ENCODE measurements at regions of chr11 and their contacts with region 1.

Region 1: DNA sequence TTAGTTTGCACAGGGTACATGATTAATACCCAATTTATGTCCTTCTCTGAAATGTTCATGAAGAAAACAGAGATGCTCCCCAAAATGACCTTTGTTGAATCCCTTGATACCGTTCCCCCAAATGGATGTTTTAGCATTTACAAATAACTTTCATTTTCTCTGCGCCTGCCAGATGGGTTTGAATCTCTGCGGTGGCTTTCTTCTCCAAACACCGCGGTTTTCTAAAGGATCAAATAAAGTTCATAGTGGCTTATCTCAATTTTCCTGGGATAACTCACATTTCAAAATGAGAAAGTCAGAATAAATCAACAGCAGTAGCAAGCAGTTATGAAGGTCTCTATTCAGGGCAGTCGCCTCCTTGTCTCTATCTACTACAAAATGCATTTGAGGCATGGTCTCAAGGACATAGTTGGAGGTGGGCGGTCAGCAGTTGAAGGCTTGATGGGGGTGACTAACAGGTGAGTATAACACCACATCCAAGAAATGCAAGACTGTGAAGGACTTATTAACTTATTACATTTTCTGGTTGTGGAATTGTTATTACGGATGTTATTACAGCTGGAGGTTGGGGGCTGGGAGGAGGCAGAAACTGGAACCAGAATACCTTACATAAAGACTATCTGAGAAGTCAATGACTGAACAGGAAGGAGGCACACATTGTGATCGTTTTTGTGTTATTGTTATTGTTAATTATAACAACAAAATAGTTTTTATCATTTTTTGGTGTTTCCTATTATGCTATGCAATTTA is 1513.3 kb downstream of the FAM181B start:
- DNase-seq: no peak
- H3K4me3 Mint-ChIP-seq: no peak overlapping the region
- H3K27ac Mint-ChIP-seq: no peak overlapping the region
- H3K4me1 Mint-ChIP-seq: no peaks in the 10 kb centered on the region
- H3K27me3 Mint-ChIP-seq: no peaks in the 10 kb centered on the region

Region 2: GRCh38 chr11:81207421-81208054 is 12.8 kb before region 1 on chr11:
- intact Hi-C with region 1: no loop called
- DNase-seq: no peak
- H3K4me3 Mint-ChIP-seq: no peak overlapping the region
- H3K27ac Mint-ChIP-seq: no peak overlapping the region
- H3K4me1 Mint-ChIP-seq: no peaks in the 10 kb centered on the region
- H3K27me3 Mint-ChIP-seq: no peaks in the 10 kb centered on the region

Region 3: GRCh38 chr11:81253244-81253643 is 32.9 kb after region 1 on chr11:
- intact Hi-C with region 1: loop called (anchors 1 kb)
- DNase-seq: no peak
- H3K4me3 Mint-ChIP-seq: no peak overlapping the region
- H3K27ac Mint-ChIP-seq: no peak overlapping the region
- H3K4me1 Mint-ChIP-seq: no peaks in the 10 kb centered on the region
- H3K27me3 Mint-ChIP-seq: peaks cover 2% of the 10 kb centered on the region

Region 4: DNA sequence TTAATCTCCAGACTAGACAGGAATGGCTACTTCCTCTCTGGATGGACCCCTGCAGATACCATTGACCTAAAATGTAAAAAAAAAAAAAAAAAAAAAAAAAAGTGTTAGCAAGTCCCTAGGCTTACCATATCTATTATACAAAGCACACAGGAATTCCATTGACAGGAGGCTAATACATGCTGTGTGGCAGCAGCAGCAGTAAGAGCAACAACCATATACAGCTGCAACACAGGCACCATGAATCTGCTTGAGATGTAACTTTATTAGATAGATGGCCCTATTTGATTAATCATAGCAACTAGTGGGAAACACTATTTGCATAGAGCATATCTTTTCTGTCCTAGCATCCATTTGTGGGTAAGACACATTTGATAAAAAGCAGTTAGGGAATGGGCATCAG is 66.2 kb after region 1 on chr11:
- intact Hi-C with region 1: no loop called
- DNase-seq: no peak
- H3K4me3 Mint-ChIP-seq: no peak overlapping the region
- H3K27ac Mint-ChIP-seq: no peak overlapping the region
- H3K4me1 Mint-ChIP-seq: no peaks in the 10 kb centered on the region
- H3K27me3 Mint-ChIP-seq: no peaks in the 10 kb centered on the region

Region 5: DNA sequence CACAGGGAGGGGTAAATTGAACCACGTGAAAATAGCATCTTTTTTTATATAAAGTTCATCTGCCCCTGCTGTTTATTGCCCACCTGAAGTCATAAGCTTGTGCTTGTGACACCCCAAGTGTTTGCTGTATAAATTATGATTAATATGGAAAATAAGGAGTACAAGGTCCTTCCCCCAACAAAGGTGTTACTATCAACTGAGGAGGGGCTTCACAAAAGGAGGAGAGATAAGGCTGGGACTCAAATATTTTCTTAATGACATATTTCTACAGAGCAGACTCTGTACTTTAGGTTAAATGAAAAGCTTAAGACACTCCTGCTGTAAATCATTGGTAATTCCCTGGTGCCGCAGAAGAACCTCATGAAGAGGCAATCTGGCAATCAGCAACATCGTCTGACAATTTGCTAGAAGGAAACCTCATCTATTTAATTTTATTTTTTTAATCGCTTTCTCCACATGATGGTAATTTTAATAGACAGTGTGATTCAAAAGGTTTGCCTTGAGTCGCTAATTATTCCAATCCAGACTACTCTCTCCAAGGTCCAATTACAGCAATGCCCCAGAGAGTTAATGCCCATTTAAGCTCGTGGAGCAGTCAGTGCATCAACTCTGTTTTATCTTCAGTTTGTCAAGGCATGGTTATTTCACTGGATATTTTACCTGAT is 81.0 kb after region 1 on chr11:
- intact Hi-C with region 1: no loop called
- DNase-seq: no peak
- H3K4me3 Mint-ChIP-seq: no peak overlapping the region
- H3K27ac Mint-ChIP-seq: no peak overlapping the region
- H3K4me1 Mint-ChIP-seq: no peaks in the 10 kb centered on the region
- H3K27me3 Mint-ChIP-seq: no peaks in the 10 kb centered on the region

Region 6: GRCh38 chr11:81548123-81548522 is 327.8 kb after region 1 on chr11:
- intact Hi-C with region 1: no loop called
- DNase-seq: no peak
- H3K4me3 Mint-ChIP-seq: no peak overlapping the region
- H3K27ac Mint-ChIP-seq: no peak overlapping the region
- H3K4me1 Mint-ChIP-seq: no peaks in the 10 kb centered on the region
- H3K27me3 Mint-ChIP-seq: no peaks in the 10 kb centered on the region

Measured in activated T-helper 1 cell treated with anti-CD3 and anti-CD28 coated beads, Interleukin-12 subunit alpha, Interleukin-12 subunit beta, Interleukin-2, Interleukin-4 antibody, amounts not matched to agents 30 ng/mL and 10 ng/mL and 1 ng/mL, durations not matched to agents 14 hours and 24 hours and 36 hours (primary cell).